A673 (cell line): ENCODE measurements at regions of chr11 and their contacts with region 1.

Region 1: DNA sequence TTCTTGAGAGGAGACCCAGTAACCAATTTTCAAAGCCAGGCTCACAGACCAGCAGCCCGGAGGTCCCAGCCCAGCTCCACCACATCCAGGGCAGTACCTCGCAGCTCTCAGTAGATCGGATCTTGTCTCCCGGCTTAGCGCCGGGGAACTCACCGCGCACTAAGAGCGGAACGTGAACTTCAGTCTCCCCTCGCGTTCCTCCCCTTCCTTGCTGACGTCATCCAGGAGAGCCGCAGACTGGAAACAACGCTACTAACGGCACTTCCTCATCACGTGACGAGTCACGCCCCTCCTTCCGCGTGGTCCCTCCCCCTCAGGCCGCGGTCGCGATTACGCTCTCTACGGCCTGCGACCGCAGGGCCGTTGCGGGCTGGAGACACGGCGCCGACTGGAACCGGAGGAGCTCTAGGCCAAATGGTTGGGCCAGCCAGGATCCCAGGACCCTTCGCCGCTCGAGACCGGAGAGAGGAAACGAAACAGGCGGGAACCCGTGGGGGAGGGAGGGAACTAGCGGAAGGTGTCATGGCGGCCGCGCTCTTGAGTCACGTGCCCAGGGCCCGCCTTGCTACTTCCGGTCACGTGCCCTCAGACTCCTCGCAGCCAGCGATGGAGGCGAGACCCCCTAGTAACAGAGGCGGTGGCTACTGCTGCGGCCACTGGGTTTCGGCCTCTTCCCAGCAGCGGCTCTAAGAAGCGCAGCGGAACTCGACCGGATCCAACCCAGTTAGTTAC is at the starts of genes GTF2H1 and HPS5:
- DNase-seq: peak; percentile 98
- H3K4me3 ChIP-seq: peak within 1 kb of the TSS; percentile 61
- H3K27ac ChIP-seq: peak within 1 kb of the TSS; percentile 98
- H3K4me1 ChIP-seq: peaks cover 15% of the 10 kb centered on the region
- H3K27me3 ChIP-seq: no peaks in the 10 kb centered on the region
- CTCF ChIP-seq: no peak
- total RNA-seq, gene GTF2H1: 46.9 and 56.2 TPM in 2 replicates
- total RNA-seq, gene HPS5: 17.7 and 18.9 TPM in 2 replicates

Region 2: DNA sequence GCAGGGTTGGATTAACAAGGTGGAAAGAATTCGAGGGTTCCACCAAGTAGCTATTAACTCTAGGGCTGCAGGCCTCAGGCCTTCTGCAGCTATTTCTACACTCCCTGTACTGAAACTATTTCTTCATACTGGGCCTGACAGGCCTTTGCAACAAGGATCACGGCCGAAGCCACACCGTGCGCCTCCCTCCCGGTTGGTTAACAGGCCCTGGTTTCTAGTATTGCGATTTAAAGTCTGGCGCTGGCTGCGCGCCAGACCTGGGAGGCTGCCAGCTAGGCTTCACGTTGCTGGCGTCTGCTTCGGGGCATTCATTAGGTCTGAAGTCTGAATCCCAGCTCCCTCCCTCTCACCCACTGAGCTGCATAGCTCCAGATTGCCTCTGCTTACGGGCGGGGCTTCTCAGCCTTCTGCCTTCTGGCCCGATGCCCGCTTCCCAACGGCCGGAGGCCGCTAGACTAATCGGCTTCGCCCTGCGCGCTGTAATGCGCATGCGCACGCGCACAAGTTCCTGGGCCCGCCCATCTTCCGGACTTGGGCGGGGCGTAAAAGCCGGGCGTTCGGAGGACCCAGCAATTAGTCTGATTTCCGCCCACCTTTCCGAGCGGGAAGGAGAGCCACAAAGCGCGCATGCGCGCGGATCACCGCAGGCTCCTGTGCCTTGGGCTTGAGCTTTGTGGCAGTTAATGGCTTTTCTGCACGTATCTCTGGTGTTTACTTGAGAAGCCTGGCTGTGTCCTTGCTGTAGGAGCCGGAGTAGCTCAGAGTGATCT is 73.8 kb after region 1 on chr11:
- CTCF ChIA-PET with region 1: no interaction called
- POLR2A ChIA-PET with region 1: interaction called, 4 read pairs
- intact Hi-C with region 1: loop called (anchors 2 kb)
- DNase-seq: peak; percentile 99
- H3K4me3 ChIP-seq: peak overlapping the region; percentile 98
- H3K27ac ChIP-seq: peak overlapping the region; percentile 98
- H3K4me1 ChIP-seq: peaks cover 13% of the 10 kb centered on the region
- H3K27me3 ChIP-seq: no peaks in the 10 kb centered on the region
- CTCF ChIP-seq: no peak